ENCODE measurements at regions of chr2 and their contacts with region 1.

Region 1: GRCh38 chr2:61970807-61971556 is 65.5 kb downstream of the COMMD1 start:
- DNase-seq: peak in 1 of 4 experiments; percentile 17
- ATAC-seq: peak; percentile 77
- H3K4me3 ChIP-seq: no peak overlapping the region
- H3K27ac ChIP-seq: no peak overlapping the region
- H3K4me1 ChIP-seq: no peaks in the 10 kb centered on the region
- H3K27me3 ChIP-seq: no peaks in the 10 kb centered on the region
- CTCF ChIP-seq: peak; percentile 17 to 35 (median 27); a peak in 2 of 6 replicates
- EP300 ChIP-seq: no peak
- POLR2A ChIP-seq: no peak
- RAD21 ChIP-seq: no peak

Region 2: DNA sequence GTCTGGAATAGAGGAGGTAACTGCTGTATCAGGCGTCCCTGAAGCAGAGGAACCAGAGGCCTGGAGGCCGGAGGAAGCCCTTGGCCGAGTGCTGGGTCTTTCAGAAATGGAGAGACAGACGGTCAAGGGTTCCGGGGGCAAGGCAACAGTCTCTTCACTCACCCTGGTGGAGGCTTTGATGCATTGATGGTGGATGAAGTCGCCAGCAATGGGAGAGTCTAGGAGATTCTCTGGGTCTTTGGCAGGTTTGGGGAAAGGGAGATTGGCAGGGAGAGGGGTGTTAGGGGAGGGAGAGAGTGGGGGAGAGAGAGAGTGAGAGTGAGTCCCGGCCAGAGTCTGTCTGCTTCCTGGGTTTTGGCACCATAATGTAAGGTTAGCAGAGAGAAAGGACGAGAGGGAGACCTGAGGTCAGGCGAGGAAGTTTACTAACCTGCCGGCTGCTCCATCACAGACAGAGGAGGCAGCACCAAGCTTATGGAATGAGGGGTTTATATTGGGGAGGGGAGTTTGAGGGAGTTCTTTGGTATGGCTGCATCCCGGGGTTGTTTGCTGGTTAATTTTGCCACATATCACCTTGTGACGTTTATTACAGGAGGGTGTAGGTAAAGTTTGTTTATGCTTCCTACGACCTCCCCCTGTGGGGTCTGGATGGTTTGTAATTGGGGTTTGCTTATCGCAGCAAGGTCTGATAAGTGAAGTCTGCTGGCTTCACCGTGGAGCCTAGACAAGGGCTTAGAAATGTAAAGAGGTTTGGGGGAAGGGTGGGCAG is 45.9 kb before region 1 on chr2:
- CTCF ChIA-PET with region 1: no interaction called
- POLR2A ChIA-PET with region 1: no interaction called
- in situ Hi-C with region 1: no loop called
- intact Hi-C with region 1: loop called (anchors 5 kb)
- DNase-seq: peak in 1 of 4 experiments; percentile 13
- ATAC-seq: peak; percentile 75
- H3K4me3 ChIP-seq: no peak overlapping the region
- H3K27ac ChIP-seq: no peak overlapping the region
- H3K4me1 ChIP-seq: peaks cover 2 to 17% of the 10 kb centered on the region in 2 experiments; a peak in 3 of 5 replicates
- H3K27me3 ChIP-seq: no peaks in the 10 kb centered on the region
- CTCF ChIP-seq: 0 out of 6 replicates have a peak, but pooled peaks of 1 of the 3 experiments have one; percentile 27
- EP300 ChIP-seq: no peak
- POLR2A ChIP-seq: no peak
- RAD21 ChIP-seq: no peak

Region 3: DNA sequence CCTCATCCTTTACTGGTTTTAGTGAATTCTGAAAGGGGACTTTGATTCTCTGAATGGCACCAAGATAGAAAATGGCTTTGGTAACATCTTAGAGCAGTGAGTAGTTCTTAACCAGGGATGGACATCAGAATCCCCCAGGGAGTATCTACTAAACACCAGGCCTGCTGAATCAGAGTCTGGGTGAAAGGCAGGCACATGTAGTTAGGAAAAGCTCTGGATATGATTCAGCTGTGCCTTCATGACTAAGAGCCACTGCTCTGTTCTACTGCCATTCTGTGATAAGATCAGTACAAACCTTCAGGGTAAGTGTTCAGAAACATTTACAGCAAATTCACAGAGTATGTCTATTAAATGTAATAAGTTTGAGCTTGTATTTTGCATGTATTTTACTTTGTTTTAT is 178.7 kb after region 1 on chr2:
- CTCF ChIA-PET with region 1: no interaction called
- POLR2A ChIA-PET with region 1: no interaction called
- in situ Hi-C with region 1: no loop called
- intact Hi-C with region 1: no loop called
- DNase-seq: peak in 3 of 4 experiments; percentile 16 to 47 (median 17)
- ATAC-seq: peak; percentile 69
- H3K4me3 ChIP-seq: no peak overlapping the region
- H3K27ac ChIP-seq: no peak overlapping the region
- H3K4me1 ChIP-seq: peaks cover 0 to 7% of the 10 kb centered on the region in 2 experiments; a peak in 2 of 5 replicates
- H3K27me3 ChIP-seq: no peaks in the 10 kb centered on the region
- CTCF ChIP-seq: no peak
- EP300 ChIP-seq: no peak
- POLR2A ChIP-seq: no peak
- RAD21 ChIP-seq: no peak

Measured in K562 (cell line).